Naive thymus-derived CD4-positive, alpha-beta T cell (primary cell): ENCODE measurements at regions of chr1 and their contacts with region 1.

Region 1: DNA sequence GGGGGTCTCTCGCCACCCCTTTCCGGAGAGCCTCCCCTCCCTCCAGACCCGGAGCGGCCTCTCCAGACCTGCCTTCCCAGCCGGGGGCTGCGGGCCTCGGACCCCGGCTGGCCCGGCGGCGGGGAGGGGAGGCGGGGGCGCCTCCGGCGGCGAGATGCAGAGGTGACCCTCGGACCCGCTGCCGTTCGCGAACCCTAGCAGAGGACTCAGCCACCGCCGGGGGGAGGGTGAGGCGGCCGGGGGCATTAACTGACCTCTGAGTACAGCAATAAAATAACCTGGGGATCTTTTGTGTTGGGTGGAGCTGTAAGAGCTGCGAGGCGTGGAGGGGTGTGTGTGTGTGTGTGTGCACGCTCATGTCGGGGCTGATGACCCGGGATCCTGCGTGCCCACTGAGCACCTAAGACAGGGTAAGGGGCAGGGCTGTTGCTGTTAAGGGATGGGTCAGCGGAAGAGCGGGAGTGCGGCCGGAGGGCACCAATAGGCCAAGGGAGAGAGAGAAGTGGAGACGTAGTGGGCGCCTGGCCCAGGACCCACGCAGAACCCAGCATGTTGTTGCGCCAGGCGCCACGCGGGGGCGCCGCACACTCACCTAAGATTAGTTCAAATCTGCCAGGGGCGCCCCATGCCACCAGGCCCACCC is 6.3 kb downstream of the HAPLN2 start:
- DNase-seq: peak; percentile 51 to 78 (median 65)
- ATAC-seq: peak; percentile 83
- H3K4me3 ChIP-seq: peak overlapping the region; percentile 47
- H3K4me3 Mint-ChIP-seq: peak overlapping the region; percentile 74 to 92 (median 81)
- H3K27ac ChIP-seq: no peak overlapping the region
- H3K27ac Mint-ChIP-seq: peak overlapping the region in 4 of 9 donors; percentile 8 to 44 (median 21)
- H3K4me1 ChIP-seq: peaks cover 9 to 15% of the 10 kb centered on the region in 2 donors
- H3K4me1 Mint-ChIP-seq: peaks cover 7 to 13% (median 11%) of the 10 kb centered on the region in 7 donors
- H3K27me3 ChIP-seq: peaks cover 8 to 31% of the 10 kb centered on the region in 2 donors
- H3K27me3 Mint-ChIP-seq: peaks cover 46 to 71% (median 59%) of the 10 kb centered on the region in 5 donors

Region 2: GRCh38 chr1:156601122-156601830 is 24.3 kb before region 1 on chr1 and contains the start of gene GPATCH4:
- CTCF ChIA-PET with region 1: no interaction called
- POLR2A ChIA-PET with region 1: no interaction called
- intact Hi-C with region 1: no loop called
- DNase-seq: peak; percentile 49 to 79 (median 74)
- ATAC-seq: peak; percentile 88
- H3K4me3 ChIP-seq: peak within 1 kb of the TSS; percentile 68
- H3K4me3 Mint-ChIP-seq: peak within 1 kb of the TSS; percentile 90 to 100 (median 93)
- H3K27ac ChIP-seq: peak within 1 kb of the TSS; percentile 86
- H3K27ac Mint-ChIP-seq: peak within 1 kb of the TSS; percentile 92 to 99 (median 94)
- H3K4me1 ChIP-seq: peaks cover 9 to 19% of the 10 kb centered on the region in 2 donors
- H3K4me1 Mint-ChIP-seq: peaks cover 24 to 41% (median 36%) of the 10 kb centered on the region in 7 donors
- H3K27me3 ChIP-seq: no peaks in the 10 kb centered on the region
- H3K27me3 Mint-ChIP-seq: no peaks in the 10 kb centered on the region
- total RNA-seq, gene GPATCH4: 33.3 to 49.6 (median 39.1) TPM

Region 3: GRCh38 chr1:156677616-156678596 is 52.3 kb after region 1 on chr1:
- CTCF ChIA-PET with region 1: interaction called, 3 read pairs
- POLR2A ChIA-PET with region 1: no interaction called
- intact Hi-C with region 1: loop called (anchors 1 kb)
- DNase-seq: peak in 2 of 9 donors; percentile 23 to 34
- ATAC-seq: peak; percentile 61
- H3K4me3 ChIP-seq: no peak overlapping the region
- H3K4me3 Mint-ChIP-seq: peak overlapping the region in 9 of 10 donors; percentile 6 to 70 (median 49)
- H3K27ac ChIP-seq: no peak overlapping the region
- H3K27ac Mint-ChIP-seq: peak overlapping the region in 1 of 9 donors; percentile 1
- H3K4me1 ChIP-seq: peaks cover 3 to 6% of the 10 kb centered on the region in 2 donors
- H3K4me1 Mint-ChIP-seq: peaks cover 8 to 17% (median 14%) of the 10 kb centered on the region in 7 donors
- H3K27me3 ChIP-seq: peaks cover 11 to 20% of the 10 kb centered on the region in 2 donors
- H3K27me3 Mint-ChIP-seq: peaks cover 50 to 82% (median 60%) of the 10 kb centered on the region in 5 donors

Region 4: DNA sequence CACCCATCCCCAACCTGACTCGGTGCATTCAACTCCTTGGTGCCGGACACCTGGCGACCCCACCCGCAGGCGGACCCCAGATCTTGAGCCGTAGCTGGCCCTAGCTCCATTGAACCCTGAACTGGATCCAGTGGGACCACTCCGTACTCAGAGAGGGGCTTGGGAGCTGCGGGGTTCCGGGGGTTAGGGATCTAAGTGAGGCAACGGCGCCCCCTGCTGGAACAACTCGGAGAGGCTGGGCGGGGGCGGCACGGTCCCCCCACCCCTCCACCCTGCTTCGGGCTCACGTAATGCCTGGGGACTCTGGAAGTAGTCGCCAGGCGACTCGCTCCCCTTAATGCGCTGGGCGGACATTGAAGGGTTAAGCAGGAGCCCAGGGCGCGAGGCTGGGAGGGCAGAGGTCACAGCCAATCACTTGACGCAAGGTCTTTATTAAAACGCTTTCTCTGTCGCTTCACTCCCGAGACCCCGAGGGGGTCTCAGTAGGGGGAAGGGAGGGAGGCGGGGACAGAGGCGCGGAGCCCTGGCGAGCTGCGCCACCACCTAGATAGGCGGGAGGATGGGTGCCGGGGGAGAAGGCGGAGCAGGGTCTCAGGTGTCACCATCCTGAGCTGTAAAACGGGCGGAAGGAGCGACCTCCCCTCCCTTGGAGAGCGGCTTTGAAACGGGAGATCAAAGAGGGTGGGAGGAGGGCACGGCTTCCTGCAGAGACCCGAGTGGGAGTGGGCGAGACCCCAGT is 80.5 kb after region 1 on chr1:
- CTCF ChIA-PET with region 1: interaction called, 5 read pairs
- POLR2A ChIA-PET with region 1: no interaction called
- intact Hi-C with region 1: loop called (anchors 1 to 5 kb)
- DNase-seq: peak; percentile 59 to 79 (median 68)
- ATAC-seq: peak; percentile 82
- H3K4me3 ChIP-seq: peak overlapping the region; percentile 81
- H3K4me3 Mint-ChIP-seq: peak overlapping the region; percentile 88 to 95 (median 92)
- H3K27ac ChIP-seq: peak overlapping the region; percentile 71
- H3K27ac Mint-ChIP-seq: peak overlapping the region; percentile 46 to 94 (median 92)
- H3K4me1 ChIP-seq: peaks cover 23 to 27% of the 10 kb centered on the region in 2 donors
- H3K4me1 Mint-ChIP-seq: peaks cover 11 to 37% (median 21%) of the 10 kb centered on the region in 7 donors
- H3K27me3 ChIP-seq: peaks cover 3 to 4% of the 10 kb centered on the region in 2 donors
- H3K27me3 Mint-ChIP-seq: peaks cover 8 to 44% (median 24%) of the 10 kb centered on the region in 5 donors

Region 5: DNA sequence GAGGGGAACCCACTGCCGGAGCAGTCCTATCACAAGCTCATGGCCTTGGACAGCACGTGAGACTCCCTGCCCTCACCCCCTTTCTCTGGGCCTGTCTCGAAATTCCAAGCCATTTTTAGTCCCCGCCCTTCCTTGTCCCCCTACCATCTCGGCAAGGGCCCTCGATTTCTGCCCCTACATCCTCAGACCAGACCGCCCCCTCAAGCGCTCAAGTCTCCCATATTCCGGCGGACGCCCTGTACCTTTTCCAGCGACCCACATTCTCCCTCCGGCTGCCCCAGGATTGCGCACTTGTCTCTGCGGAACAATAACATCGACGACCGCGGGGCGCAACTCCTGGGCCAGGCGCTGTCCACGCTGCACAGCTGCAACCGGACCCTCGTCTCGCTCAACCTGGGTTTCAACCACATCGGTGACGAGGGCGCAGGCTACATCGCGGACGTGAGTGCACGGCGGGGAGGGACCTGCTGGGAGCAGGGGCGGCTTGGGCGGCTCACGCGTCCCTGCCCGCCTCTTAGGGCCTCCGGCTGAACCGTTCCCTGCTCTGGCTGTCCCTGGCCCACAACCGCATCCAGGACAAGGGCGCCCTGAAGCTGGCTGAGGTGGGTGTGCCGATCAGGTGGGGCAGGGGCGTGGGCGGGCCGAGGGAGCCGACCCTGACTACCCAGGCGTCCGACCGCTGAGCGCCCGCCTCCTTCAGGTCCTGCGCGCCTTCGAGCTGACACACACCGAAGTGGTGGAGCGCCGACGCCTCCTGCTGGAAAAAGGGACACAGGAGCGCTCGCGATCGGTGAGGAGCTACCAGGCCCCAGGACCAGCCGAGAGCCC is 301.9 kb after region 1 on chr1:
- CTCF ChIA-PET with region 1: no interaction called
- POLR2A ChIA-PET with region 1: no interaction called
- intact Hi-C with region 1: loop called (anchors 2 kb)
- DNase-seq: peak; percentile 42 to 72 (median 59)
- ATAC-seq: peak; percentile 76
- H3K4me3 ChIP-seq: no peak overlapping the region
- H3K4me3 Mint-ChIP-seq: peak overlapping the region; percentile 13 to 83 (median 65)
- H3K27ac ChIP-seq: no peak overlapping the region
- H3K27ac Mint-ChIP-seq: peak overlapping the region in 2 of 9 donors; percentile 29 to 59
- H3K4me1 ChIP-seq: peaks cover 0 to 8% of the 10 kb centered on the region in 2 donors
- H3K4me1 Mint-ChIP-seq: peaks cover 18 to 35% (median 31%) of the 10 kb centered on the region in 7 donors
- H3K27me3 ChIP-seq: peaks cover 16 to 27% of the 10 kb centered on the region in 2 donors
- H3K27me3 Mint-ChIP-seq: peaks cover 72 to 91% (median 81%) of the 10 kb centered on the region in 5 donors

Region 6: DNA sequence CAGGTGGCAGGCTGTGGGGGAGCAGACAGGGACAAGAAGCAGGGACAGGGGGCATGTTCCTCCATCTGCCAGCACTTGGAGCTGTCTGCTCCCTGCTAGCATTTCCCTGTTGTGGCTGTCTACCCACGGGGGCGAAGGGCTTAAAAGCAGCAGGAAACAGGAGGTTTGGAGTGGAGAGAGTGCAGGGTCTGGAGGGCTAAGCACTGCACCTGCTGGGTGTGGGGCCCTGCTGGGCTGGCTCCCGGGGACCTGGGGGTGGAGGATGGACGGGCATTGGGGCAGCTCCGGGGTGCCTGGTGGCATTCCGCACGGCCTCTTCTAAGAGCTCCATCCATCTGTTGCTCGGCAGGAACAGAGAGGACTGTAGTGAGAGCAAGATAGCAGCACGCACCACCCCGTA is 316.1 kb after region 1 on chr1:
- CTCF ChIA-PET with region 1: no interaction called
- POLR2A ChIA-PET with region 1: no interaction called
- intact Hi-C with region 1: no loop called
- DNase-seq: no peak
- ATAC-seq: no peak
- H3K4me3 ChIP-seq: no peak overlapping the region
- H3K4me3 Mint-ChIP-seq: no peak overlapping the region
- H3K27ac ChIP-seq: no peak overlapping the region
- H3K27ac Mint-ChIP-seq: no peak overlapping the region
- H3K4me1 ChIP-seq: no peaks in the 10 kb centered on the region
- H3K4me1 Mint-ChIP-seq: peaks cover 0 to 9% (median 0%) of the 10 kb centered on the region in 7 donors
- H3K27me3 ChIP-seq: no peaks in the 10 kb centered on the region
- H3K27me3 Mint-ChIP-seq: no peaks in the 10 kb centered on the region